Activated CD8-positive, alpha-beta T cell treated with anti-CD3 and anti-CD28 coated beads for 36 hours (primary cell): ENCODE measurements at regions of chr22 and their contacts with region 1.

Region 1: GRCh38 chr22:50525390-50526068 is at the start of gene SCO2:
- DNase-seq: peak; percentile 99
- ATAC-seq: peak; percentile 59
- H3K4me3 Mint-ChIP-seq: peak within 1 kb of the TSS; percentile 94
- H3K27ac Mint-ChIP-seq: peak within 1 kb of the TSS; percentile 88
- H3K4me1 Mint-ChIP-seq: peaks cover 25% of the 10 kb centered on the region
- H3K27me3 Mint-ChIP-seq: no peaks in the 10 kb centered on the region
- CTCF ChIP-seq: no peak
- total RNA-seq, gene SCO2: 2.7 TPM in 1 of 2 experiments, not detected in the other

Region 2: DNA sequence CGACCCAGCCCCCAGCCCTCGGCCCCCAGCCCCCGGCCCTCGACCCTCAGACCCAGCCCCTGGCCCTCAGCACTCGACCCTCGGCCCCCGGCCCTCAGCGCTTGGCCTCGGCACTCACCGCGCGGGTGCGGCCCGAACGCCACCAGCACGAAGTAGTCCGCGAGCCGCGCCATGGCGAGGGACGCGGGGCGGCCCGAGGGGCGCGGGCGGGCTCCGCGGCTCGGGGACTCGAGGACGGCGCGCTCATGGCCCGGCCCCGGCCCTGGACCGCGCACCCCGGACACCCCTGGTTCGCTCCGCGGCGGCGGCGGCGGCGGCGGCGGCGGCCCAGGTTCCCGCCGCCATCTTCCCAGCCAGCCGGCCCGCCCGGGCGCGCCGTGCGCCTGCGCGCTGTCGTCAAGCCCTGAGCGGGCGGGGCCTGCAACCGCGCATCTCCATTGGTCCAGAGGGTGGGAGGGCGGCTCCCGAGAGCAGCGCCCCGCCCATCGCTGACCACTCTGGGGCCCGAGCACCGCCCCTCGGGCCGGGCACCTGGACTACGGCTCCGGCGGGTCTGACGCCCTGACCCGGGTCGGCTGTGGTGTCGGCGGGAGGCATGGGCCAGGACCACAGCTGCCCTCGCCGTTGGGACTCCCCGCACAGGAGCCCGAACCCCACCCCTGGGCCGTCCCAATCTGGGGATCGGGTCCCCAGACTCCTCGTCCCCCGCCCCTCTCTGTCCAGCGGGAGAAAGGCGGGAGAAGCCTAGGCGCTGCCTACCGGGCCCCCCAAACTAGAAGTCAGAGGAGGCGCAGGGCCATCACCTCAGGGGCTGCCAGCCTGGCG is 50.6 kb before region 1 on chr22 and contains the start of gene SBF1:
- CTCF ChIA-PET with region 1: interaction called, 15 read pairs
- POLR2A ChIA-PET with region 1: interaction called, 38 read pairs
- intact Hi-C with region 1: no loop called
- DNase-seq: peak; percentile 91
- ATAC-seq: peak; percentile 76
- H3K4me3 Mint-ChIP-seq: peak within 1 kb of the TSS; percentile 99
- H3K27ac Mint-ChIP-seq: peak within 1 kb of the TSS; percentile 95
- H3K4me1 Mint-ChIP-seq: peaks cover 46% of the 10 kb centered on the region
- H3K27me3 Mint-ChIP-seq: peaks cover 1% of the 10 kb centered on the region
- CTCF ChIP-seq: no peak
- total RNA-seq, gene SBF1: 120 TPM

Region 3: DNA sequence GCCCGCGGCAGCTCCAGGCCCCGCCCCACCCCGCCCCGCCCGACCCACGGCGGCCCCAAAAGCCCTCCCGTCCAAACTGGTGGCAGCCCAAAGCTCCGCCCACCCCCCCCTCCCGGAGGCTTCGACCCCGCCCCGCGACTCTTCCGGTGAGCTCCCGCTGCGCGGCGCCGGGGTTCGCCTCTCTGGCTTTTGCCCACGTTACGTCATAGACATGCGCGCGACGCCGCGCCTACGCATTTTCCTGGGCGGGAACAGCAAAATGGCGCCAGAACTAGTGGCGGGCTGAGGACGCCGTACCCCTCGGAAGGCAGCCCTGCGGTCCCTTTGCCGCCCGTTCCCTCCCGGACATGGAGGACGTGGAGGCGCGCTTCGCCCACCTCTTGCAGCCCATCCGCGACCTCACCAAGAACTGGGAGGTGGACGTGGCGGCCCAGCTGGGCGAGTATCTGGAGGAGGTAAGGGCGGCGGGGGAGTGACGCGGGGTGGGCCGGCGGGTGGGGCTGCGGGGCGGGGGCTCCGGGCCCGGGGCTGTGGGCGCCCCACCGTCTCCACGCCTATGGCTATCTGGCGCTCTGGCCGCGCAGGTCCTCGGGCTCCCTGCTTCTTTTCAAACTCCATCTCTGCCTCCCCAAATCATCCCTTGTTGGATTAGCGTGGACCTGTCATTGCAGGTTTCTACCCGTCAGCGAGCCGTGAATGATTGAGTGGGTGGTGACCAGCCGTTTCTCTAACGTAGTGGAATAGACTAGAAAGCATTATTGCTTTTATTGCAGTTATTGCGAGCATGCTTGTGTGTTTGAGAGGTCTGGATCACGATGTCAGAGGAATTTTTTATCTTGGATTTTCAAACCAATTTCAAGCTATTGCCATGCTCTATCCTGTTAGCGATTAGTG is 17.3 kb before region 1 on chr22 and contains the start of gene NCAPH2:
- CTCF ChIA-PET with region 1: interaction called, 80 read pairs
- POLR2A ChIA-PET with region 1: interaction called, 111 read pairs
- intact Hi-C with region 1: no loop called
- DNase-seq: peak; percentile 98
- ATAC-seq: peak; percentile 36
- H3K4me3 Mint-ChIP-seq: peak within 1 kb of the TSS; percentile 98
- H3K27ac Mint-ChIP-seq: peak within 1 kb of the TSS; percentile 97
- H3K4me1 Mint-ChIP-seq: peaks cover 22% of the 10 kb centered on the region
- H3K27me3 Mint-ChIP-seq: no peaks in the 10 kb centered on the region
- CTCF ChIP-seq: no peak
- total RNA-seq, gene NCAPH2: 121 to 126 TPM

Region 4: DNA sequence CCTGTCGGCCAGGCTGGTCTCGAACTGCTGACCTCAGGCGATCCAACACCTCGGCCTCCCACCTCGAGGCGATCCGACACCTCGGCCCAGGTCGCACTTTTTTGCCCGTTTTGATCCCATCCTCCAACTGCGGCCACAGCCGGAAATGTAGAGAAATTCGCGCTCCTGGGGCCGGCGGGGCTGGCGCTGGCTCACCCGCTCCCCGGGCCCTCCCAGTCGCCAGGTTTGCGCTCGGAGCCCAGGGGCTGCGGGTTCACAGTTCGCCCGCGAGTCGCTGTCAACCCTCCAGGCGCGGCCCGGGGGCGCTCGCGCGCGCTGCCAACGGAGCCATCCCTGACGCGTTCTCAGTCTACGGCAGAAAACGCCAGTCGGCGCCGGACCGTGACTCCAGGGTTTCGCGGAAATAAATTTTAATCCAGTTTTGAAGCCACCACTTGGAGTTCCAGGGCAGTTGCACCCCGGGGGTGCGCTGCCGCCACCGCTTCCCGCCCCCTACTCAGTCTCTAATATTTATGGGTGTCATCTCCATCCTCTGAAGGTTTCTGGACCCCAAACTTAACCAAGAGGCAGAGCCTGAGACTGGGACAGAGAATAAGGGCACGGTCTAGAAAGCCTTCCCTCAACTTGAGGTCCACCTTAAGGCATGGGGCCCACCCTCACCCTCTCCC is 18.7 kb after region 1 on chr22:
- CTCF ChIA-PET with region 1: interaction called, 65 read pairs
- POLR2A ChIA-PET with region 1: interaction called, 175 read pairs
- intact Hi-C with region 1: no loop called
- DNase-seq: peak; percentile 93
- ATAC-seq: peak; percentile 59
- H3K4me3 Mint-ChIP-seq: peak overlapping the region; percentile 38
- H3K27ac Mint-ChIP-seq: peak overlapping the region; percentile 80
- H3K4me1 Mint-ChIP-seq: peaks cover 58% of the 10 kb centered on the region
- H3K27me3 Mint-ChIP-seq: no peaks in the 10 kb centered on the region
- CTCF ChIP-seq: peak; percentile 73

Region 5: DNA sequence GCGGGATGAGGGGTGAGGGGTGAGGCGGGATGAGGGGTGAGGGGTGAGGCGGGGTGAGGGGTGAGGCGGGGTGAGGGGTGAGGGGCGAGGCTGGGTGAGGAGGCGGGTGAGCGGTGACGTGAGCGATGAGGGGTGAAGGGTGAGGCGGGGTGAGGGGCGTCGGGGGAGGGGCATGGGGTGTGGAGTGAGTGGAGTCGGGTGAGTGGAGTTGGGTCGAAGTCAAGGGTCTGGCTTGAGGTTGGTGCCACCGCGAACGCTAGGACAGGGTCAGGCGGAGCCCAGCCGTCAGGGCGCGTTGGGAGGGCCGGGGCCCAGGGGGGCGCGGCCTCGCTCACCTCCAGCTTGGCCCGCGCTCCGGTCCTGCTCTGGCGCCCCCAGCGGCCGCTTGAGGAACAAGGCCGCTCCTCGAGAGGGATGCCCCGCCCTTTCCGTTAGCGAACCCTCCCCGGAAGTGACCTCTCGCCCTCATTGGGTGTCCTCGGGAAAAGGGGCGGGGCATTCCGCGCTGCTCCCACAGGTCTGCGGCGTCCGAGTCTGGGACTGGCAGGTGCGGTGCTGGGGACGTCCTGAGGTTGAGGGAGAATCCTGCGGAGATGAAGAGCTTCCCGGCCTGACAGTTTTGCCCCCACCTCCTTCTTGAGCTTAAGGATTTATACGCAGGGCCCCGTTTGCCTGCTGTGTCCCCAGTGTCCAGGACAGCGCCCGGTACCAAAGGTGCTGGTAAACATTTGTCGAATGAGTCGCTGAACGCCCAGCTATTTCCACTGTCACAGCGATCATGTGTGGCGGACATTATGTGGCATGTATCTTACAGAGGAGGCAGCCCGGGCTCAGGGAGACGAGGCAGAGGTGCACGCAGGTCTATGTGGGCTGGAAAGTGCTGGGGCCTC is 37.2 kb after region 1 on chr22 and contains the start of gene SYCE3:
- CTCF ChIA-PET with region 1: interaction called, 23 read pairs
- POLR2A ChIA-PET with region 1: interaction called, 27 read pairs
- intact Hi-C with region 1: no loop called
- DNase-seq: peak; percentile 98
- ATAC-seq: peak; percentile 99
- H3K4me3 Mint-ChIP-seq: peak within 1 kb of the TSS; percentile 83
- H3K27ac Mint-ChIP-seq: peak within 1 kb of the TSS; percentile 47
- H3K4me1 Mint-ChIP-seq: peaks cover 15% of the 10 kb centered on the region
- H3K27me3 Mint-ChIP-seq: no peaks in the 10 kb centered on the region
- CTCF ChIP-seq: peak; percentile 82
- total RNA-seq, gene SYCE3: not detected

Region 6: GRCh38 chr22:50620593-50621355 is 95.2 kb after region 1 on chr22:
- CTCF ChIA-PET with region 1: interaction called, 67 read pairs
- POLR2A ChIA-PET with region 1: interaction called, 30 read pairs
- intact Hi-C with region 1: no loop called
- DNase-seq: peak; percentile 96
- ATAC-seq: peak; percentile 71
- H3K4me3 Mint-ChIP-seq: peak overlapping the region; percentile 84
- H3K27ac Mint-ChIP-seq: peak overlapping the region; percentile 99
- H3K4me1 Mint-ChIP-seq: peaks cover 35% of the 10 kb centered on the region
- H3K27me3 Mint-ChIP-seq: no peaks in the 10 kb centered on the region
- CTCF ChIP-seq: peak; percentile 53